ENCODE measurements at regions of chr3 and their contacts with region 1.

Region 1: GRCh38 chr3:39189959-39190269 is 2.5 kb downstream of the XIRP1 start:
- DNase-seq: peak; percentile 69
- H3K4me3 Mint-ChIP-seq: no peak overlapping the region
- H3K27ac Mint-ChIP-seq: no peak overlapping the region
- H3K4me1 Mint-ChIP-seq: peaks cover 13% of the 10 kb centered on the region
- H3K27me3 Mint-ChIP-seq: no peaks in the 10 kb centered on the region

Region 2: DNA sequence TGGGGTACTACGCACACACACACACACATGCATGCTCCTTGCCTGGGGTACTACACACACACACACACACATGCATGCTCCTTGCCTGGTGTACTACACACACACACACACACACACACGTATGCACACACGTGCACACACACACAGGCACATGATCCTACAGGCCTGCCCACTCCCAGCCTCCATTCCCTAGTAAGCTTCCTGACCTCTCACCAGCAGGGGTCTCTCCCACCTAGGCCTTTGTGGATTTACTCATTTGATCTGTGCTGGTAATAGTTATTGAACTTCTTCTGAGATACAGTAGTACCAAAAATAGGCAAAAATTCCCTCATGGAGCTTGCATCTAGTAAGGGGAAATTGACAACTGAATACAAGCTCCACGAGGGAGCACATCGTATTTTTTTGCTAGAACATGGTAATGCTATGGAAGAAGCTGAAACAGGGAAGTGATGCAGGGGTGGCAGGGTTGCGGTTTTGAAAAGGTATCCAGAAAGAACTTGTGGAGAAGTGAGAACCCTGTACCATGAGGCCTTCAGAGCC is 63.3 kb before region 1 on chr3:
- CTCF ChIA-PET with region 1: interaction called, 22 read pairs
- POLR2A ChIA-PET with region 1: no interaction called
- DNase-seq: no peak
- H3K4me3 Mint-ChIP-seq: no peak overlapping the region
- H3K27ac Mint-ChIP-seq: no peak overlapping the region
- H3K4me1 Mint-ChIP-seq: peaks cover 24% of the 10 kb centered on the region
- H3K27me3 Mint-ChIP-seq: no peaks in the 10 kb centered on the region

Region 3: DNA sequence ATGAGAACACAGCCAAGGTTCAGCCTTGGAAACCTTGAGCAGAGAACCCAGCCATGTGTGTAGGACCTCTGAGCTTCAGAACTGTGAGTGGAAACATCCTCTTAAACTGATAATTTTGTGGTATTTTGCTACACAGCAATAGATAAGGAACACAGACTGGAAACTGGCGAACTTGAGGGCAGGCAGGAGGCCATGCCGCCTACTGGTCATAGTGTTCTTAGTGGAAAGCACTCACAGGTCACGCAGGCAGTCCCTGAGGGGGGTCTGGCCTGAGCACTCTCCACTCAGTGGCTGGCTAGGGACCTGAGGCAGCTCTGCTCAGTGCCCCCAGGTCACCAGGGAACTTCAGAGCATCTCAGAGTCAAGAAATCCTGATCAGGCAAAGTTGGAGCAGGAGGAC is 12.2 kb after region 1 on chr3:
- CTCF ChIA-PET with region 1: interaction called, 14 read pairs
- POLR2A ChIA-PET with region 1: no interaction called
- DNase-seq: peak; percentile 11
- H3K4me3 Mint-ChIP-seq: no peak overlapping the region
- H3K27ac Mint-ChIP-seq: no peak overlapping the region
- H3K4me1 Mint-ChIP-seq: peaks cover 2% of the 10 kb centered on the region
- H3K27me3 Mint-ChIP-seq: peaks cover 37% of the 10 kb centered on the region

Region 4: DNA sequence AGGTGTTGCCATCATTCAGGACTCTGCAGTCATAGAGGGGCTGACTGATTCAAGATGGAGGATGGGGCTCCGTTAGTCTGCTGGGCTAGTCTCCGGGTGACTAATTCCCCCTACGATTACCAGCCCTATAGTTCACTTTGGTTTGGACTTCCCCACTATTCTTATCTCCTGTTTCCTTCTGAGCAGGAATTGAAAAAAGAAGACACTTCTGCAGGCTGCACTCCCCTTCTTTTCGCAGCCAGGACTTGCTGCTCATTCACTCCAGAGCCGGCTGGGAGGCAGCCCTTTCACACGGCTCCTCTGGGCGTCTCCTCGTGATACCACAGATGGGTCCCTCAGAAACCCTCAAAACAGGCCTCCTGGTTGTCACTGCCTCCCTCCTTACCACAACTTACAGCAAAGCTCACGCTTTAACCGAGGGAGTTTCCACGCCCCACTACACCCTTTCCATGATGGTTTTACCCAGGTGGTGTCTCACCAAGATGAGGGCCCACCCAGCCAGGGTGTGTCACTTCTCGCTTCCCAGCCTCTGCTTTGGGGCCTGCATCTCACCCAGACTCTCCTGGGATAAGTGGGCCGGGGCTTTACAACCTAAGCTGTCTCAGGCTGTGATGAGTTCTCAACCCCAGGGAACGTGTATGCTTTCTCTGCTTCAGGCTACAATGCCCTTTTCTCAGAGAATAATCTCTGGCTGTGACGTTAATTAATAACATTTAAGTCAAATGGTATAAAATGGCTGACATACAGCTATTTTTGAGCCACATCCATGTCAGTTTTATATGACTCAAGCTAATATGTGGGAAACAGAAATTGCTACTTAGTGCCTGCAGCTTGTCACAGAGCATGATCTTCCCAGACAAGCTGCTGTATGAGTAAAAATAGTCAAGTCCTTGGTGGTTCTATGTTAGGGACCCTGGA is 78.0 kb after region 1 on chr3:
- CTCF ChIA-PET with region 1: interaction called, 15 read pairs
- POLR2A ChIA-PET with region 1: no interaction called
- DNase-seq: peak; percentile 83
- H3K4me3 Mint-ChIP-seq: peak overlapping the region; percentile 38
- H3K27ac Mint-ChIP-seq: peak overlapping the region; percentile 95
- H3K4me1 Mint-ChIP-seq: peaks cover 47% of the 10 kb centered on the region
- H3K27me3 Mint-ChIP-seq: peaks cover 11% of the 10 kb centered on the region

Region 5: DNA sequence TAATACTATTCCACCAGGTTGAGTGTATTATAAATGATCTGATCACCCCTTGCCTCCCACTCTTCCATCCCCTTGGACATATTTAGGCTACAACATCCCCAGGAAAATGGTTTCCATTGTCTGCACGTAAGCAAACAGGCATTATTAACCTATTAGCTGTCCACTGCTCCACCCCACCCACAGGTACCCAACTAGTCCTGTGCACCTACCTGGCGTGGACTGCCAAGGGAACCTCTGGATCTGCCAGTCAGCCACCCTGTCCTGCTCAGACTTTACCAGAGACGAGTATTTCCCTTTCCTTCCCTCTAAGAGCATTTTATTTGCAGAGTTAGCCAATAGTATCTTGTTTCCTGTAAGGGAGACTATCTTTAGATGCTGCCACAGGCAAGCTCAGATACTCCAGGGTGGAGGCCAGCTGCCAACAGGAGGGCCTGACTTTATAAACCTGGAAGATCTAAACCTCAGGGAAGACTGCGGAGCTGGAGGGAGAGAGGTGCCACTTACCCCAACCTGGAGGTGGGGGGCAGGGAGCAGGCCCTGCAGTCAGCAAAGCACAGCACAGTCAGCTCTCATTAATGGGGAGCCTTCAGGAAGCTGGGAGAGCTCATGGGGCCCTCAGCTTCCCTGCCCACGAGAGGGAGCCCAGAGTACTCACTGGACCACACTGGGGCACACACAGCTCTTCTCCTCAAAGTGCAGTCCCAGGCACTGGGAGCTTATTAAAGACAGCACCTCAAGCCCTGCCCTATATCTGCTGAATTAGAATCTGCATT is 90.0 kb after region 1 on chr3 and contains the start of gene CX3CR1:
- CTCF ChIA-PET with region 1: interaction called, 633 read pairs
- POLR2A ChIA-PET with region 1: interaction called, 4 read pairs
- DNase-seq: no peak
- H3K4me3 Mint-ChIP-seq: peak within 1 kb of the TSS; percentile 50
- H3K27ac Mint-ChIP-seq: no peak within 1 kb of the TSS
- H3K4me1 Mint-ChIP-seq: peaks cover 86% of the 10 kb centered on the region
- H3K27me3 Mint-ChIP-seq: peaks cover 11% of the 10 kb centered on the region
- total RNA-seq, gene CX3CR1: 5.5 to 6.2 TPM

Region 6: DNA sequence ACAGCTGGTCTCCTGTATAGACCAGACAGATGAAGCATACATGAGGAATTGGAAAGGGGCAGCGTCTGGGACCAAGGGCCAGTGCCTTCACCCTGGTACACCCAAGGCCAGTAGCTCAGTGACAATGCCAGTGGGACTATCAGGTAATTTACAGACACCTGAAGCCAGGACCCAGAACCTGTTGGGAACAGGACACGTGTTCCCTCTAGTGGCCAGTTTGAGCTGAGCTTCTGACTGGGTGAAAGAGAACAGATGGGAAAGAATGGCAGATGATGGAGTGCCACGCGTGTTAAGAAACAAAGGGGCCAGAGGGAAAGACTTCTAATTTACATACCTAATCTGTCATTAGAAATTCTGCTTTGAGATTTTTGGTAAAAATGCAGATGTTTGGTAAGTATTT is 188.2 kb after region 1 on chr3:
- CTCF ChIA-PET with region 1: interaction called, 35 read pairs
- POLR2A ChIA-PET with region 1: interaction called, 4 read pairs
- DNase-seq: peak; percentile 73
- H3K4me3 Mint-ChIP-seq: no peak overlapping the region
- H3K27ac Mint-ChIP-seq: no peak overlapping the region
- H3K4me1 Mint-ChIP-seq: peaks cover 25% of the 10 kb centered on the region
- H3K27me3 Mint-ChIP-seq: no peaks in the 10 kb centered on the region

Region 7: DNA sequence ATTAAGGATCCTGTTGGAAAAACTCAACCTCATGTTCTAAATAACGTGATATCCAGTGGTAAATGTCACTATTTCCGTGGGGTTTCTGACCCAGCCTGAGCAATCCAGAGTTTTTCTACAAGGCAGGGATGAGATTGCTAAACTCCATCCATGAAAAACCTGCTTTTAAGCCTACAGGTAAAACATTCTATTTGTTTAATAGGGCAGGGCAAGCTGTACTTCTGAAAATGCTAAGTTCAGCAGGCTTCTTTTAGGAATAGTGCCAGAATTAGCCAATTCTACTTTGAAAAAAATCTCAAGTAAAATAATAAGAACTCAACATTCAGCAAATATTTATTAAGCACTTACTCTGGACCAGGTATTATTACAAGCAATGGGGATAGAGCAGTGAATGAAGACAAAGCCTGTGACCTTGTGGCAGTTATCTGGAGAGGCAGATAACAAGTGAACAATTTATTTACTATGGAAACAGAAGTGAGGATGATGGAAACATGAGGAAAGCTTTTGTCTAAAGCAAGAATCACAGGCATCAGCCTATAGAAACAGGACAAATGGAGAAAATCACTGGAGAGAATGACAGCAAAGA is 229.9 kb after region 1 on chr3:
- CTCF ChIA-PET with region 1: no interaction called
- POLR2A ChIA-PET with region 1: no interaction called
- DNase-seq: no peak
- H3K4me3 Mint-ChIP-seq: no peak overlapping the region
- H3K27ac Mint-ChIP-seq: no peak overlapping the region
- H3K4me1 Mint-ChIP-seq: no peaks in the 10 kb centered on the region
- H3K27me3 Mint-ChIP-seq: peaks cover 2% of the 10 kb centered on the region

Measured in activated CD4-positive, alpha-beta memory T cell treated with anti-CD3 and anti-CD28 coated beads, Interleukin-2, amount 10 ng/mL, durations not matched to agents 7 days and 5 days (primary cell).